ENCODE measurements at regions of chr2 and their contacts with region 1.

Region 1: GRCh38 chr2:191555092-191555742 is 122.7 kb upstream of the NABP1 start:
- DNase-seq: peak; percentile 66 to 73 (median 70)
- H3K4me3 ChIP-seq: no peak overlapping the region
- H3K4me3 Mint-ChIP-seq: peak overlapping the region in 1 of 8 donors; percentile 34
- H3K27ac ChIP-seq: no peak overlapping the region
- H3K27ac Mint-ChIP-seq: no peak overlapping the region
- H3K4me1 ChIP-seq: no peaks in the 10 kb centered on the region
- H3K4me1 Mint-ChIP-seq: peaks cover 2 to 5% (median 3%) of the 10 kb centered on the region in 4 donors
- H3K27me3 ChIP-seq: peaks cover 3% of the 10 kb centered on the region
- H3K27me3 Mint-ChIP-seq: peaks cover 14 to 18% of the 10 kb centered on the region in 2 donors

Region 2: GRCh38 chr2:190947711-190948251 is 607.4 kb before region 1 on chr2:
- CTCF ChIA-PET with region 1: no interaction called
- POLR2A ChIA-PET with region 1: no interaction called
- intact Hi-C with region 1: no loop called
- DNase-seq: peak in 4 of 5 donors; percentile 26 to 58 (median 48)
- H3K4me3 ChIP-seq: no peak overlapping the region
- H3K4me3 Mint-ChIP-seq: peak overlapping the region in 7 of 8 donors; percentile 13 to 77 (median 52)
- H3K27ac ChIP-seq: peak overlapping the region; percentile 14
- H3K27ac Mint-ChIP-seq: peak overlapping the region in 6 of 7 donors; percentile 66 to 91 (median 86)
- H3K4me1 ChIP-seq: peaks cover 29% of the 10 kb centered on the region
- H3K4me1 Mint-ChIP-seq: peaks cover 19 to 24% (median 20%) of the 10 kb centered on the region in 4 donors
- H3K27me3 ChIP-seq: no peaks in the 10 kb centered on the region
- H3K27me3 Mint-ChIP-seq: no peaks in the 10 kb centered on the region

Region 3: DNA sequence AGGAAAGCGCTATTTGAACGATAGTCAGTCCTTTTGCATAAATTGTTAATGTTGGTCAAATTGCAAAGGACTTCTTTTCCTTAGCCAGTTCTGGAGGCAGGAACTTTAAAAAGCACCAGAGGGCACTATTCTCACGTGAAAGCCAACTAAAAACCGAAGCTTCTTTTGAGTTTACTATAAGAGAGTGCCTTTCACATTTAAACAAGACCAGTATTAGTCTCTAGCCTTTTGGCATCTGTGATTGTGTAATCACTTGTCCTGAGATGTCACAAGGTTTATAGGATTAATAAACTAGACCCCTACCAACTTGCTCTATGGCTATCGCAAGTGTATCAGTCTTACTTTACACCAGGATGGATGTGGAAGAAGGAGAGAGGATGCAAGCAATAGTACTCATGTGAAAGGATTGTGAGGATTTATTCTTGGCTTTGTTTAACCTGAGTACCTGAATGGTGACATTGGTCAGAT is 390.0 kb before region 1 on chr2:
- CTCF ChIA-PET with region 1: interaction called, 26 read pairs
- POLR2A ChIA-PET with region 1: no interaction called
- intact Hi-C with region 1: no loop called
- DNase-seq: peak in 4 of 5 donors; percentile 45 to 57 (median 48)
- H3K4me3 ChIP-seq: no peak overlapping the region
- H3K4me3 Mint-ChIP-seq: no peak overlapping the region
- H3K27ac ChIP-seq: no peak overlapping the region
- H3K27ac Mint-ChIP-seq: peak overlapping the region in 2 of 7 donors; percentile 54 to 77
- H3K4me1 ChIP-seq: no peaks in the 10 kb centered on the region
- H3K4me1 Mint-ChIP-seq: peaks cover 5 to 6% (median 6%) of the 10 kb centered on the region in 4 donors
- H3K27me3 ChIP-seq: no peaks in the 10 kb centered on the region
- H3K27me3 Mint-ChIP-seq: peaks cover 0 to under 1% of the 10 kb centered on the region in 2 donors

Region 4: GRCh38 chr2:191401287-191401686 is 153.9 kb before region 1 on chr2:
- CTCF ChIA-PET with region 1: no interaction called
- POLR2A ChIA-PET with region 1: no interaction called
- intact Hi-C with region 1: no loop called
- DNase-seq: no peak
- H3K4me3 ChIP-seq: no peak overlapping the region
- H3K4me3 Mint-ChIP-seq: no peak overlapping the region
- H3K27ac ChIP-seq: no peak overlapping the region
- H3K27ac Mint-ChIP-seq: no peak overlapping the region
- H3K4me1 ChIP-seq: no peaks in the 10 kb centered on the region
- H3K4me1 Mint-ChIP-seq: peaks cover 0 to 2% (median 0%) of the 10 kb centered on the region in 4 donors
- H3K27me3 ChIP-seq: no peaks in the 10 kb centered on the region
- H3K27me3 Mint-ChIP-seq: peaks cover 0 to 3% of the 10 kb centered on the region in 2 donors

Region 5: GRCh38 chr2:191544461-191545062 is 10.7 kb before region 1 on chr2:
- CTCF ChIA-PET with region 1: interaction called, 44 read pairs
- POLR2A ChIA-PET with region 1: no interaction called
- intact Hi-C with region 1: no loop called
- DNase-seq: no peak
- H3K4me3 ChIP-seq: no peak overlapping the region
- H3K4me3 Mint-ChIP-seq: no peak overlapping the region
- H3K27ac ChIP-seq: no peak overlapping the region
- H3K27ac Mint-ChIP-seq: no peak overlapping the region
- H3K4me1 ChIP-seq: no peaks in the 10 kb centered on the region
- H3K4me1 Mint-ChIP-seq: no peaks in the 10 kb centered on the region
- H3K27me3 ChIP-seq: no peaks in the 10 kb centered on the region
- H3K27me3 Mint-ChIP-seq: peaks cover 2 to 4% of the 10 kb centered on the region in 2 donors

Region 6: DNA sequence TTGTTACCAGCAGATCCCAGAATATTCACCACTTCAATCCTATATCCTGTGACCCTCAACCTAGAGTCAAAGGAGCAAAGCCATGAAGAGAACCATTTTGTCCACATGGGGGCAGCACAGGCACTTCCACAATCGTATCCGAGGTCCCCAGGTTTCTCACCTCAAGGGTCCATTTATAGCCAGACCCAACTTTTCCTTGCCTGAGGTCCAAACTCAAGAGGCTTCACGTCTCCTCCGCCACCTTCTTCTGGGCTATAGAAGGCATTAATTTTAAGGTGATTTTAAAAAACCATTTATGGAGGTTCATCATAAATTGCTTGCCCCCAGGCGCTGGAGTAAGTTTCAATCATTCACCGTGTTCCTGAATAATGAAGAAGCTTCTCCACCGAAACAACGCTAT is 11.1 kb after region 1 on chr2:
- CTCF ChIA-PET with region 1: interaction called, 68 read pairs
- POLR2A ChIA-PET with region 1: no interaction called
- intact Hi-C with region 1: no loop called
- DNase-seq: peak; percentile 47 to 63 (median 52)
- H3K4me3 ChIP-seq: no peak overlapping the region
- H3K4me3 Mint-ChIP-seq: no peak overlapping the region
- H3K27ac ChIP-seq: no peak overlapping the region
- H3K27ac Mint-ChIP-seq: no peak overlapping the region
- H3K4me1 ChIP-seq: peaks cover 19% of the 10 kb centered on the region
- H3K4me1 Mint-ChIP-seq: peaks cover 15 to 33% (median 25%) of the 10 kb centered on the region in 4 donors
- H3K27me3 ChIP-seq: peaks cover 3% of the 10 kb centered on the region
- H3K27me3 Mint-ChIP-seq: peaks cover 11 to 21% of the 10 kb centered on the region in 2 donors

Region 7: DNA sequence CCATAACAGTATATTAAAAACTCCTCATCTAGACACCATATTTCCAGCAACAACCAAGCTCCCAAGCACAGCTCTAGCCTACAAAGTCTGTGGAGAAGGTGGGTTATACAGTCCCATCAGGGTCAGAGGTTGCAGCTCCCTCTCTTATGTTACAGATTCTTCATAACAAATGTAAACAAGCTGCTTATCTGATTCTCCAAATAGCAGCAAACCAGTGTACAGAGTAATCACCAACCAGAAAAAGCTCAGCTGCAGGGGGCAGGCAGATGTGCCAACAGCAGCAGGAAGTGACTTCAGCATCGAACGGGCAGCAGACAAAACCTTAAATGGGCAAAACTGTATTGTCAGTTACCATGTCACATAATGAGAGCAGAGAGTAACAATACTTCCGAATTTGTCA is 69.8 kb after region 1 on chr2:
- CTCF ChIA-PET with region 1: no interaction called
- POLR2A ChIA-PET with region 1: no interaction called
- intact Hi-C with region 1: no loop called
- DNase-seq: peak; percentile 66 to 87 (median 83)
- H3K4me3 ChIP-seq: no peak overlapping the region
- H3K4me3 Mint-ChIP-seq: peak overlapping the region in 6 of 8 donors; percentile 31 to 68 (median 58)
- H3K27ac ChIP-seq: peak overlapping the region; percentile 48
- H3K27ac Mint-ChIP-seq: peak overlapping the region; percentile 77 to 97 (median 91)
- H3K4me1 ChIP-seq: peaks cover 71% of the 10 kb centered on the region
- H3K4me1 Mint-ChIP-seq: peaks cover 46 to 90% (median 68%) of the 10 kb centered on the region in 4 donors
- H3K27me3 ChIP-seq: no peaks in the 10 kb centered on the region
- H3K27me3 Mint-ChIP-seq: no peaks in the 10 kb centered on the region

Region 8: DNA sequence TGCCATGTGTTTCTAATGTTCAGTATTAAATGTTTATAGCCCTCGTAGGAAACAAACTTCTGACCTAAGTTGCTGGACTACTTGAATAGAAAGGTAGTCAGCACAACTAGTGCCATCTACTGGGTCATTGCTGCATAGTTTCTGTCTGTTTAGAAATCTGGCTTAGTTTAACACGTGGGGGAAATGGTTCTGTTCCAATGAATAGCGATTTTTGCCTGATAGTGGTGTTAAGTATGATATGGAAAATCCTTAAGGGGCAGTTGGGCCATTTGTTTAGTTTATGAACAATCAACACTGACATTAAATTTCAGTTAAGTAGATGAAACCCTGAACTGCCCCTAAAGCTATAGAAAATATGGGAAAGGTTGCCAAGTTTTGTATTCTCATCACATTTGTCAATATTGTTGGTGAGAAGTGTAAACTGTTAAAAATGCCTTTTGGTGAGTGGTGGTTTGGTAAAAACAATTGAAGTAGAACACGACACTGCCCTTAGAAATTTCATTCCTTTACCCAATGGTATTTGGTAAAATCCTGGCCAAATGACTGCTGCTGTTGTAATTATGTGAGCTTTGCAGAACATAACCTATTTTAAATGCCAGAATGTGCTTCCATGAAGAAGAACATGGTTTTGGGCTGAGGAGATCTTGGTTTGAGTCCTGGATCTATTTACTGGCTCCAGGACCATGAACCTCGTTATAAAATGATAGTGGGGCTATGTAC is 136.0 kb after region 1 on chr2:
- CTCF ChIA-PET with region 1: interaction called, 16 read pairs
- POLR2A ChIA-PET with region 1: no interaction called
- intact Hi-C with region 1: loop called (anchors 1 kb)
- DNase-seq: peak; percentile 61 to 67 (median 65)
- H3K4me3 ChIP-seq: no peak overlapping the region
- H3K4me3 Mint-ChIP-seq: no peak overlapping the region
- H3K27ac ChIP-seq: no peak overlapping the region
- H3K27ac Mint-ChIP-seq: peak overlapping the region; percentile 40 to 90 (median 73)
- H3K4me1 ChIP-seq: peaks cover 30% of the 10 kb centered on the region
- H3K4me1 Mint-ChIP-seq: peaks cover 20 to 46% (median 32%) of the 10 kb centered on the region in 4 donors
- H3K27me3 ChIP-seq: no peaks in the 10 kb centered on the region
- H3K27me3 Mint-ChIP-seq: no peaks in the 10 kb centered on the region

Region 9: GRCh38 chr2:191696966-191697365 is 141.7 kb after region 1 on chr2:
- CTCF ChIA-PET with region 1: interaction called, 16 read pairs
- POLR2A ChIA-PET with region 1: no interaction called
- intact Hi-C with region 1: no loop called
- DNase-seq: no peak
- H3K4me3 ChIP-seq: no peak overlapping the region
- H3K4me3 Mint-ChIP-seq: no peak overlapping the region
- H3K27ac ChIP-seq: no peak overlapping the region
- H3K27ac Mint-ChIP-seq: peak overlapping the region in 1 of 7 donors; percentile 90
- H3K4me1 ChIP-seq: no peaks in the 10 kb centered on the region
- H3K4me1 Mint-ChIP-seq: peaks cover 0 to 8% (median 6%) of the 10 kb centered on the region in 4 donors
- H3K27me3 ChIP-seq: no peaks in the 10 kb centered on the region
- H3K27me3 Mint-ChIP-seq: no peaks in the 10 kb centered on the region

Measured in CD4-positive, alpha-beta memory T cell (primary cell).